Right ventricle myocardium inferior (tissue), 1 donor: ENCODE measurements at regions of chr7 and their contacts with region 1.

Region 1: GRCh38 chr7:16098585-16099179 is 322.7 kb downstream of the CRPPA start:
- DNase-seq: no peak
- ATAC-seq: no peak

Region 2: DNA sequence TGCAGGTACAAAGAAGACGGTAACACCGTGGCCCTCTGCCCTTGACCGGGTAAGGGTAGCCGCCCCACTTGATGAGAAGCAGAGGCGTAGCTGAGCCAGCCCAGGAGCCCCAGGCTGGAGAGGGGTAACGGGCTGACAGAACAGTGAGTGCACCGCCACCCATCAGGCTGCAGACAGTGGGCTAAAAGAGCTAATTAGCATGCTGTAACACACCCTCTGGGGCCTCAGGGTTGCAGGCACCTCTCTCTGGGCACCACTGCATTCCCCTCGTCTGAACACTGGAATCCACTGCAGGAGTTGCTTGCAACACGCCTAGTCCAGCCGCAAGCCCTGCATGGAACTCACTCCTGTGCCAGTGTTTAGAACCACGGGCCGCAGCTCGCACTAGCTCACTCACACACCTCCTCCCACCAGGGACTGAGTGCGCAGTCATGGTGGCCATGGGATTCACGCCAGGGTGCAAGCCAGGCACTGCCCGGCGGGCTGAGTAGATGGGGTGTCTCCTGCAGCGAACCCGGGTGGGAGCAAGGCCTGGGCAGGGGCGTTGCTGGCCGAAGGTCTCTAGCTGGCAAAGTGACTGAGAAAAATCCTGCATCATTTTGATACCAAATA is 572.9 kb before region 1 on chr7:
- intact Hi-C with region 1: no loop called
- DNase-seq: peak; percentile 62
- ATAC-seq: no peak

Region 3: DNA sequence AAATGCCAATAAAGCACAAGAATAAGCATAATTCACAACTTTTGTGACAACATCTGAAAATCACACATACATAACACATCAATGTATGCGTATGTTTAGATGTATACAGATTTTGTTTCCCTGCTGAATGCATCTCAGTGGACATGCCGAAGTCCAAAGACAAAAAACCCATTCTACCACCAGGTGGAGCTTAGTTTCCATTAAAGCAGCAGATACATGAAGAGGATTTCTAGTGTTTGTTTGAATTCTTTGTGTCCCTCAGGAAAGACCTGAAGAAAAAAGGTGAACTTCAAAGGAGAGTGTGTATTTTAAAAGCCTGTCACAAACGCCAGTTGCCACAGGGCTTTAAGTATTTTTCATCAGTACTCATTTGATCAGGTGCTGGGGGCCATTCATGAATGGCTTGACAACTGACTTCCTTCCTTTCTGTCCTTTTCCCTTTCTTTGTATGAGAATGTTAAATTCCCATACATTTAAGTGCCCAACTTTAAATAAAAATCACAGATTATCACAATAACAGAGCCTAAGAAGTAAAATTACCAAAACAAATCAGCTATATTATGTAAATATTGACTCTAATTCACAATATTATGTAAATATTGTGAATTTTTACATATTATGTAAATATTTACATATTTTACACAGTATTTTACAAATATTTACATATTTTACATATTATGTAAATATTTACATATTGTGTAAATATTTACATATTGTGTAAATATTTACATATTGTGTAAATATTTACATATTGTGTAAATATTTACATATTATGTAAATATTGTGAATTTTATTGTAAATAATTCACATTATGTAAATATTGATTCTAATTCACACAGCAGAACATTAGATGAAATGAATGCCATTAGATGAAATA is 20.4 kb before region 1 on chr7:
- intact Hi-C with region 1: loop called (anchors 2 kb)
- DNase-seq: no peak
- ATAC-seq: no peak